PC-3 (cell line): ENCODE measurements at regions of chr15 and their contacts with region 1.

Region 1: DNA sequence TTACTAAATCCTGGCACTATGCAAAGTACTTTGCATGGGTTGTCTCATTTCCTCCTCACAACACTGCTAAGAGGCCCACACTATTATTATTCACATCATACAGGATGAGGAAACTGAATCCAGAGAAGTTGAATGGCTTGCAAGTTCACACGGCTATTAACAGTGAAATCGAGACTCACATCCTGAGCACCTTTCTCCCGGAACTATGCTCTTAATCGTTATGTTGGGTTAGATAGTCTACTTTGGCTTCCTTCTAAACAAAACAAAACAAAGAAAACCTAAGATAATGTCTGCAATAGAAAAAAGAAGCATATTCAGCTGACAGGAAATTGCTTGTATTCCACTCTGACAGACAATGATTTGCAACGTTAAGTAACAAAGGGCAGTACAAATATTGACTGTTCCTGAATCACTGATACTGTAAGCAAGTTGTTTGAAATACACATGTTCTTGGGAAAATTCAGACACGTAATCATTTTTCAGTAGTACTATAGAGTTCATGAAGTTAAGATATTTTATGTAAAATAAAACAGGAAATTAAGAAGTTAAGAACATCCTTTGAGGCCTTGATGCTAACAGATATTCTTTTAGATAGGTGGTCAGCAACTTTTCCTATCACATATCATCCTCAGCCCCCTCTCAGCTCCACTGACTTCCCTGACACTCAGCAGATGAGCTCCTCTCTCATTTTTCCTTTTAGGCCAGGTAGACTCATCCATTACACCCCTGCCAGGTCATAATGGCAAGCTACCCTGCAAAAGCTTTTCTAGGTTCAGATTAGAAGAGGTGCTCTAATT is 40.7 kb downstream of the C2CD4B start:
- DNase-seq: peak; percentile 63
- ATAC-seq: peak; percentile 80
- H3K4me3 ChIP-seq: peak overlapping the region; percentile 41; the same call in 1 of the 2 replicates
- H3K27ac ChIP-seq: peak overlapping the region; percentile 90
- H3K4me1 ChIP-seq: peaks cover 28% of the 10 kb centered on the region
- H3K27me3 ChIP-seq: no peaks in the 10 kb centered on the region
- CTCF ChIP-seq: no peak

Region 2: GRCh38 chr15:62099094-62099601 is 25.2 kb before region 1 on chr15:
- CTCF ChIA-PET with region 1: no interaction called
- POLR2A ChIA-PET with region 1: no interaction called
- intact Hi-C with region 1: loop called (anchors 1 kb)
- DNase-seq: peak; percentile 74
- ATAC-seq: peak; percentile 87
- H3K4me3 ChIP-seq: peak overlapping the region; percentile 22; the same call in 1 of the 2 replicates
- H3K27ac ChIP-seq: peak overlapping the region; percentile 59
- H3K4me1 ChIP-seq: peaks cover 7% of the 10 kb centered on the region
- H3K27me3 ChIP-seq: no peaks in the 10 kb centered on the region
- CTCF ChIP-seq: no peak

Region 3: DNA sequence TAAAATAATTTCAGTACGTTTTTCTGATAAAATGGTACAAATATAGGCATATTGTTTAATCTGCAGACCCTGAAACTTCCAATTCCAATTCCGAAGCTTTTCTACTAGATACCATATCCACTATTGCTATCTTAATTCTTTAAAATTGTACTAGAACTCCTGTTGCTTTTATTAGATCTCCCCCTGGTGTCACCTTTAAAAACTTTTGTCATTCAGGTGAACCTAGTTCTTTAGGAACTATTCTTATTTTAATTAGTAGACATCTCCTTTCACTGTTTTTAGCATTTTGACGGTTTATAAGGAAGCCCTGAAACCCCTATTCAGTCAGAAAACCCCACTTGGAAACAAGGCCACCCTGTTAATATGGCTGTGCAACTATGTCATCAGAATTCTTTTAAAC is 18.4 kb after region 1 on chr15:
- CTCF ChIA-PET with region 1: interaction called, 4 read pairs
- POLR2A ChIA-PET with region 1: no interaction called
- intact Hi-C with region 1: loop called (anchors 1 kb)
- DNase-seq: peak; percentile 38
- ATAC-seq: no peak
- H3K4me3 ChIP-seq: no peak overlapping the region
- H3K27ac ChIP-seq: no peak overlapping the region
- H3K4me1 ChIP-seq: peaks cover 20% of the 10 kb centered on the region
- H3K27me3 ChIP-seq: no peaks in the 10 kb centered on the region
- CTCF ChIP-seq: peak; percentile 68

Region 4: GRCh38 chr15:62164500-62165103 is 40.2 kb after region 1 on chr15:
- CTCF ChIA-PET with region 1: no interaction called
- POLR2A ChIA-PET with region 1: no interaction called
- intact Hi-C with region 1: no loop called
- DNase-seq: no peak
- ATAC-seq: no peak
- H3K4me3 ChIP-seq: no peak overlapping the region
- H3K27ac ChIP-seq: no peak overlapping the region
- H3K4me1 ChIP-seq: no peaks in the 10 kb centered on the region
- H3K27me3 ChIP-seq: peaks cover 18% of the 10 kb centered on the region
- CTCF ChIP-seq: no peak

Region 5: GRCh38 chr15:62323353-62323890 is 199.0 kb after region 1 on chr15:
- CTCF ChIA-PET with region 1: no interaction called
- POLR2A ChIA-PET with region 1: no interaction called
- intact Hi-C with region 1: no loop called
- DNase-seq: no peak
- ATAC-seq: no peak
- H3K4me3 ChIP-seq: no peak overlapping the region
- H3K27ac ChIP-seq: no peak overlapping the region
- H3K4me1 ChIP-seq: peaks cover 4% of the 10 kb centered on the region; the same call in 1 of the 2 replicates
- H3K27me3 ChIP-seq: no peaks in the 10 kb centered on the region
- CTCF ChIP-seq: no peak